Psoas muscle (tissue), 8 donors: ENCODE measurements at regions of chr2 and their contacts with region 1.

Region 1: DNA sequence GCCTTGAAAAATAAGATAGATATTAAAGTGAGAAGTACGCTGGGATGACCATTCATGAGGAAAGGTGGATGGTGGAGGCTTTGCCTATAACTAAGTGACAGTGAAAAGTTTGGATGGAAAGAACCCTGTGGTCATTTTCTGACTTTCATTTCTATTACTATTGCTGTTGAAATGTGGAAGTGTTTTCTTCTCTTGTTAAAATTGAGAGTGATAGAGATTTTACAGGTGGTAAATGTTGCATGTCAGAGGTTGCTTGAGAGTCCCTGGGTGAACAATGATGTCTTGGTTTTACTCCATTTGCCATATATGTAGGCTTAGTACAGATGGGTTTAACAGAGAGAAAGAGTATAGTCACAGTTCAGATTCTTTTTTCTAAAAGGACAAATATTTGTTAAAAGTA is 18.4 kb downstream of the NCOA1 start:
- DNase-seq: no peak
- ATAC-seq: no peak
- H3K4me3 ChIP-seq: no peak overlapping the region
- H3K27ac ChIP-seq: no peak overlapping the region
- H3K4me1 ChIP-seq: peaks cover 69% of the 10 kb centered on the region
- H3K27me3 ChIP-seq: no peaks in the 10 kb centered on the region
- CTCF ChIP-seq: no peak

Region 2: GRCh38 chr2:24559475-24560109 is 50.2 kb after region 1 on chr2:
- intact Hi-C with region 1: loop called in 1 of 2 experiments (anchors 10 kb)
- DNase-seq: no peak
- ATAC-seq: peak in 2 of 4 donors; percentile 29 to 31
- H3K4me3 ChIP-seq: no peak overlapping the region
- H3K27ac ChIP-seq: no peak overlapping the region
- H3K4me1 ChIP-seq: peaks cover 39% of the 10 kb centered on the region
- H3K27me3 ChIP-seq: no peaks in the 10 kb centered on the region
- CTCF ChIP-seq: no peak

Region 3: DNA sequence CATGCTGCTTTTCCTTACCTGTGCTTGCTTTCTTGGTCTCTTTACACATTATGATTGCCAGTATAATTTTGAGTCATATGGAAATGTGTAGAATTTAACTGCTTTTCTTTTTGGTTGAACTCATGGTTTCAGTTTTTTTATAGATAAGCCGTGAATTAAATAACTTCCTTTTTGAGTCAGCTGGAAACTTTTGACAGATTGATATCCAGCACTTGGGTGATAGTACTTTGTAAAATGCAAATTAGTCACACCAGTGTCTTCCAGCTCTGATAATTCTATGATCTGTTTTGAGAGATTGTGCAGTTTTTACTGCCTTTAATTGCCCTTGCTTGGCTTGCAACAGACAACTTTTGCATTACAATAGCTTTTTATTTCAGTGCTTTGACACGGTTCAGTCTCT is 68.1 kb after region 1 on chr2:
- intact Hi-C with region 1: loop called in 1 of 2 experiments (anchors 5 kb)
- DNase-seq: no peak
- ATAC-seq: no peak
- H3K4me3 ChIP-seq: no peak overlapping the region
- H3K27ac ChIP-seq: no peak overlapping the region
- H3K4me1 ChIP-seq: peaks cover 36% of the 10 kb centered on the region
- H3K27me3 ChIP-seq: no peaks in the 10 kb centered on the region
- CTCF ChIP-seq: no peak

Region 4: DNA sequence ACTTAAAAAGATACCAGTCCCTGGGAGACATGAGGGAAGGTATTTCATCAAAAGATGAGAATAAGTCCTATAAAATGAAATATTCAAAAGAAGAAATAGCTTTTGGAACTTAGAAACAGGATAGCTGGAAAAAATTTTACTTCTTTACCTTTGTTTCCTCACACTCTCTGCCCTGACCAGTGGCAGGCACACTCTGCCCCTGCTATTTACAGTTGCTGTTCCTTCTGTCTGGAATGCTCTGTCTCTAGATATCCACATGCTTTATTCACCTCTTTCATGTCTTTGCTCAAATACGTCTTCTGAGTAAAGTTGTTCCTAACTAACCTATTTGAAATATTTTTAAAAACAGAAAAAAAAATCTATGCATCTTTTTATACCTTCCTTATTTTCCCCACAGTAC is 158.1 kb after region 1 on chr2:
- intact Hi-C with region 1: no loop called
- DNase-seq: no peak
- ATAC-seq: no peak
- H3K4me3 ChIP-seq: no peak overlapping the region
- H3K27ac ChIP-seq: no peak overlapping the region
- H3K4me1 ChIP-seq: peaks cover 7% of the 10 kb centered on the region
- H3K27me3 ChIP-seq: no peaks in the 10 kb centered on the region
- CTCF ChIP-seq: no peak